ENCODE measurements at regions of chr3 and their contacts with region 1.

Region 1: DNA sequence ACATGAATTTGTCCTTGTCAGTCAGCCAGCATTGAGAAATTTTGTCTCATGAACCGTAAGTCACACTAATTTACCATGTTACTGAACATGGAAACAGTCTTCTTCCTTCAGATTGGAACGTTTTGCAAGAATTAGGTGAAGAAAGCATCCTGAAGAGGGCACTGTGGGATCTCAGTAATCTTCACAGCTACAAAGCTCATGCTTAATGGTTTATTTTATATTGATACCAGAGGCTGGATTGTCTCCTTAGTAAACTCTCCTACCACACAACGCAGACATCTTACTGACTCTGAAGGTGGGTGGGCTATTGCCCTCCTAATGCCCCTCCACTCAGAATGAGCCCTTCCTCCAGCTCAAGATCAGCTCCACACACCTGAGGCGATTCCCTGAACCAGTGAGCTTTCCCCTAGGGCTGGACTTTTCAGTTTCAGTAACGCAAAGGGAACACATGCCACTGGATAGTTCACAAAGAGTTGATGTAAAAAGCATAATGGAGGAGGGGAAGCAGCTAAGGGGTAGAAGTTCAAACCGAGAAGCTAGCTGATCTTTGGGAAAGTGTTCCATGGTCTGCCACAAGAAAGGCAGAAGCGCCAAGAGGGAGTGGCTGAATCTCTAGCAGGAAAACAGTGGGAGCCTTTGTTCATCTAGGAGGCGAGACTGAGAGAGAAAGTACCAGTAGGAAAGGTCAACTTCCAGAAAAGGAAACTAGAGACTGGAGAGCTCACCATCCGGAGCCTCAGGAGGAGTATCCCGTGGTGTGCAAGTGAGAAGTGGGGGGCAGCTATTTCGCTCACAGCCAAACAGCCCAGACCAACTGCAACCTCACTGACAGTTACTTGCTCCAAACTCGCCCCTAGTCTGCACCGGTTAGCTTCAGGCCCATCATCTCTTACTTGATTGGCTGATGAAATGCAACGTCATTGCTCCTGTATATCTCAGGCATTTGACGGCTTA is at the start of gene SLC9C1:
- DNase-seq: peak; percentile 38
- ATAC-seq: peak; percentile 89
- H3K4me3 ChIP-seq: peak within 1 kb of the TSS in 2 of 3 experiments; percentile 25 to 33; a peak in 3 of 6 replicates
- H3K27ac ChIP-seq: no peak within 1 kb of the TSS
- H3K4me1 ChIP-seq: peaks cover 8% of the 10 kb centered on the region
- H3K27me3 ChIP-seq: no peaks in the 10 kb centered on the region
- CTCF ChIP-seq: peak; percentile 72
- EP300 ChIP-seq: no peak
- POLR2A ChIP-seq: no peak
- RAD21 ChIP-seq: no peak
- total RNA-seq, gene SLC9C1: not detected in 2 replicates

Region 2: GRCh38 chr3:112136959-112137693 is 156.5 kb before region 1 on chr3:
- CTCF ChIA-PET with region 1: no interaction called
- POLR2A ChIA-PET with region 1: no interaction called
- in situ Hi-C with region 1: no loop called
- intact Hi-C with region 1: loop called (anchors 10 kb)
- DNase-seq: peak; percentile 42
- ATAC-seq: peak; percentile 87
- H3K4me3 ChIP-seq: no peak overlapping the region
- H3K27ac ChIP-seq: no peak overlapping the region
- H3K4me1 ChIP-seq: no peaks in the 10 kb centered on the region
- H3K27me3 ChIP-seq: no peaks in the 10 kb centered on the region; a peak in 1 of 5 replicates
- CTCF ChIP-seq: peak; percentile 70
- EP300 ChIP-seq: no peak
- POLR2A ChIP-seq: no peak
- RAD21 ChIP-seq: 0 out of 2 replicates have a peak, but pooled peaks have one; percentile 29

Region 3: DNA sequence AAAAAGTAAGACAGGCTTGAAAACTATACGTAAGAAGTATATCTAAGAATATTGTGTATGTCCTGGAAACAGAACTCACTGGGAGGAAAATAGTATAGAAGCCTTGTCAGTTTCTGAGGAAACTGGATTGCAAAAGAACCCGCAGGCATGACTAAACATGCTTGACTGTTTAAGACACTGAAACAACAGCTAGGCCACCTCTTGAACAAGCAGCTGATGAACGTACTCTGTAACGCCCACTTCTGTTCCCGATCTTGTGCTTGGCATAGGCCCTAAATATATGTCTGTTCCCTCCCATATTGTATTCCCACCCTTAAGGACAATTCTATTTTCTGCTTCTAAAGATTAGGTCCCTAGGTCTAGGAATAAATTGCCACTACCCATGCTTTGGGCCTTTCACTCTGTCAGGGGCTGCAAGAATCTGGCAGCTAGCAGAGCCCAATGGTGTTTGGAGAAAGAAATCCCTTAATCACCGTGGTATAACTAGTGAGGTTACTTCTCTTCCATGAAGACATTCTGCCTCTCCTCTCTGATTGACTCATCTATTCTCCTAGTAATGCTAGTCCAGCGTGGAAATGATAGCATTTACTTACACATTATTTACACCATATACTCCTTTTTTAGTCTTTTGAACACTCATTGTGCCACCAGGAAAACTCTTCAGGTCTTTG is 85.5 kb after region 1 on chr3:
- CTCF ChIA-PET with region 1: no interaction called
- POLR2A ChIA-PET with region 1: no interaction called
- in situ Hi-C with region 1: no loop called
- intact Hi-C with region 1: no loop called
- DNase-seq: no peak
- ATAC-seq: no peak
- H3K4me3 ChIP-seq: no peak overlapping the region
- H3K27ac ChIP-seq: no peak overlapping the region
- H3K4me1 ChIP-seq: no peaks in the 10 kb centered on the region
- H3K27me3 ChIP-seq: no peaks in the 10 kb centered on the region
- CTCF ChIP-seq: no peak
- EP300 ChIP-seq: no peak
- POLR2A ChIP-seq: no peak
- RAD21 ChIP-seq: no peak

Region 4: GRCh38 chr3:112437146-112438022 is 143.7 kb after region 1 on chr3:
- CTCF ChIA-PET with region 1: no interaction called
- POLR2A ChIA-PET with region 1: no interaction called
- in situ Hi-C with region 1: no loop called
- intact Hi-C with region 1: loop called (anchors 1 kb)
- DNase-seq: peak; percentile 9
- ATAC-seq: peak; percentile 80
- H3K4me3 ChIP-seq: no peak overlapping the region
- H3K27ac ChIP-seq: no peak overlapping the region
- H3K4me1 ChIP-seq: no peaks in the 10 kb centered on the region
- H3K27me3 ChIP-seq: no peaks in the 10 kb centered on the region; a peak in 1 of 5 replicates
- CTCF ChIP-seq: peak; percentile 39
- EP300 ChIP-seq: no peak
- POLR2A ChIP-seq: no peak
- RAD21 ChIP-seq: peak; percentile 15; the same call in 1 of the 2 replicates

Region 5: DNA sequence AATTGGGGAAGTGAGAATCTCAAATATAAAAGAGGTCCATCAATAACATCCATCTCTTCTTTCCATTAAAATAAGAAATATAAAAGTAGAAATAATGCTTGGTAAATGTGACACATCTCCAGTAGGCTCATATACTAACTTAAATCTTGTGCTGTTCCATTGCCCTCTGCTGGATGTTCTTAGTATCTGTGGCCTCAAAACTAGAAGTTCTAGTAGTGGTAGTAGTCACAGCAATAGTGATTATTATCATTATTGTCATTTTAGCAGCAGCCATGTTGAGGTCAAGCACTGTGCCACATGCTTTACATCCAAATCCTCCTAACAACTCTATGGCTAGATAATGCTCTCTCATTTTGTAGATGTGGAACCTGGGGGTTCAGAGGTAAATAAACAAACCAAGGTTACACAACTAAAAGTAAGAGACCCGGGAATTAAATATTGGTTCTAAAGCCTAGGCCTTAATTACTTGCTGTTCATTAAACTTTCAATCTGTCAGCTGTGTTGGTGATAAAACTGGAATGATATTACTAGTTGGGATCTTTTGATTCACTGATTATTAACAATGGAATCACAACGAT is 225.9 kb after region 1 on chr3:
- CTCF ChIA-PET with region 1: no interaction called
- POLR2A ChIA-PET with region 1: no interaction called
- in situ Hi-C with region 1: no loop called
- intact Hi-C with region 1: loop called (anchors 1 kb)
- DNase-seq: peak; percentile 56
- ATAC-seq: peak; percentile 91
- H3K4me3 ChIP-seq: no peak overlapping the region
- H3K27ac ChIP-seq: no peak overlapping the region
- H3K4me1 ChIP-seq: no peaks in the 10 kb centered on the region
- H3K27me3 ChIP-seq: no peaks in the 10 kb centered on the region
- CTCF ChIP-seq: peak; percentile 68
- EP300 ChIP-seq: no peak
- POLR2A ChIP-seq: no peak
- RAD21 ChIP-seq: no peak

Region 6: DNA sequence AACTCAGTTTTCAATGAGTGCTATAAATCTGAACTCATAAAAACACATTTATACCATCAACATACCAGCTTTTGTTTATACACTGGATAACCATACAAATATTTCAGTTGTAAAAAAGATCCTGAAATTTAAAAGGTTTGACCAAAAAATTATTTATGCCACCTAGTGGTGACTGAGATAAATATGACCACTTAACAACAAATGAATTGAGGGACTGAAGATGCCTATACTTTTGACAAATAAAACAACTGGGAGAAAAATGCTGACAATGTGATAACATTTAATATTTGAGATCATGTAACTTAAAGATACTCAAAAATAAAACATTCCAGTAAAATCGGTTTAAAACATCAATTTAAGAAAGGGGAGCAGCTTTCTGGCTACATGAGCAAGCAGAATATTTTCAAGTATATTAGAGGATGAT is 237.7 kb after region 1 on chr3:
- CTCF ChIA-PET with region 1: interaction called, 6 read pairs
- POLR2A ChIA-PET with region 1: no interaction called
- in situ Hi-C with region 1: no loop called
- intact Hi-C with region 1: loop called (anchors 1 kb)
- DNase-seq: peak; percentile 3
- ATAC-seq: no peak
- H3K4me3 ChIP-seq: no peak overlapping the region
- H3K27ac ChIP-seq: no peak overlapping the region
- H3K4me1 ChIP-seq: no peaks in the 10 kb centered on the region
- H3K27me3 ChIP-seq: no peaks in the 10 kb centered on the region
- CTCF ChIP-seq: peak; percentile 39
- EP300 ChIP-seq: no peak
- POLR2A ChIP-seq: no peak
- RAD21 ChIP-seq: no peak

Measured in HepG2 (cell line).